Calu3 (cell line): ENCODE measurements at regions of chr19 and their contacts with region 1.

Region 1: GRCh38 chr19:51338563-51339312 is 3.2 kb downstream of the VSIG10L start:
- DNase-seq: peak; percentile 91
- H3K4me3 Mint-ChIP-seq: peak overlapping the region; percentile 72
- H3K27ac Mint-ChIP-seq: no peak overlapping the region
- H3K4me1 Mint-ChIP-seq: peaks cover 30% of the 10 kb centered on the region
- H3K27me3 Mint-ChIP-seq: no peaks in the 10 kb centered on the region
- CTCF ChIP-seq: peak; percentile 98

Region 2: DNA sequence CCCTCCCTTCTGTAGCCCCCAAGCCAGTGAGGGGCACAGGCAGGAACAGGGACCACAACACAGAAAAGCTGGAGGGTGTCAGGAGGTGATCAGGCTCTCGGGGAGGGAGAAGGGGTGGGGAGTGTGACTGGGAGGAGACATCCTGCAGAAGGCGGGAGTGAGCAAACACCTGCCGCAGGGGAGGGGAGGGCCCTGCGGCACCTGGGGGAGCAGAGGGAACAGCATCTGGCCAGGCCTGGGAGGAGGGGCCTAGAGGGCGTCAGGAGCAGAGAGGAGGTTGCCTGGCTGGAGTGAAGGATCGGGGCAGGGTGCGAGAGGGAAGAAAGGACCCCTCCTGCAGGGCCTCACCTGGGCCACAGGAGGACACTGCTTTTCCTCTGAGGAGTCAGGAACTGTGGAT is 479.8 kb before region 1 on chr19:
- CTCF ChIA-PET with region 1: no interaction called
- intact Hi-C with region 1: no loop called
- DNase-seq: no peak
- H3K4me3 Mint-ChIP-seq: no peak overlapping the region
- H3K27ac Mint-ChIP-seq: no peak overlapping the region
- H3K4me1 Mint-ChIP-seq: no peaks in the 10 kb centered on the region
- H3K27me3 Mint-ChIP-seq: no peaks in the 10 kb centered on the region
- CTCF ChIP-seq: no peak

Region 3: DNA sequence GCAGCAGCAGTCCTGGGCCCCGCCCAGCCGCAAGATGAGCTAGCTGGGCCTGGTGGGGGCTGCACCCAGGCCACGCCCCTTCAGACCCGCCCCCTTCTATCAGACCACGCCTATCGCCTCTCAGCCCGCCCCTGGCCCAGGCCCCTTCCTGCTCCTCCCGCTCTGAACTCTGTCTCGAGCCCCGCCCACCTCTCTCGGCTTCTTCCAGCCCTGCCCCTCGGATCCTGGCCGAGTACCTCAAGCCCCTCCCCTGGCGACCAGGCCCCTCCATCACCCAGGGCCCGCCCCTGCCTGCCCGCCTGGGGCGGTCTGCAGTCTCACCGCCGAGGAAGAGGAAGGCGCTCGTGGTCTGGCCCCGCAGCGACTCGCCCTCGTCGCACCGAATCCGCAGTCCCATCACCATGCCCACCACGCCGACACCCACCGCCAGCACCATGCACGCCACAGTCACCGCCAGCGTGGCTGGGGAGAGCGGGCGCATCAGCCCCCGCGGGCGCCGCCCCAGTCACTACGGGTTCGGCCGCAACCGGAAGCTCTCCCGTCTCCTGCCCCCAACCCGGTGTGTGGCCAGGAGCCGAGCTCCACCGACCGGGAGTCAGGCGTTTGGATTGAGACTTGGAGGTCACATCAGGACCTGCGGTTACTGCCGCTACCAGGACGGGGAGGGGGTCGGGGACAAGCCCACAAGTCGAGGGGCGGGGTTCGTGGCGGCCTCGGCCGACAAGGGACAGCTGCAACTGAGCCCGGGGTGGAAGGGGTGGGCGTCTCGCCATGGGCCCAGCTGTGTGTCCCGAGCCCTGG is 29.0 kb after region 1 on chr19:
- CTCF ChIA-PET with region 1: interaction called, 17 read pairs
- intact Hi-C with region 1: loop called (anchors 2 kb)
- DNase-seq: peak; percentile 100
- H3K4me3 Mint-ChIP-seq: peak overlapping the region; percentile 80
- H3K27ac Mint-ChIP-seq: peak overlapping the region; percentile 93
- H3K4me1 Mint-ChIP-seq: peaks cover 20% of the 10 kb centered on the region
- H3K27me3 Mint-ChIP-seq: peaks cover 32% of the 10 kb centered on the region
- CTCF ChIP-seq: no peak

Region 4: DNA sequence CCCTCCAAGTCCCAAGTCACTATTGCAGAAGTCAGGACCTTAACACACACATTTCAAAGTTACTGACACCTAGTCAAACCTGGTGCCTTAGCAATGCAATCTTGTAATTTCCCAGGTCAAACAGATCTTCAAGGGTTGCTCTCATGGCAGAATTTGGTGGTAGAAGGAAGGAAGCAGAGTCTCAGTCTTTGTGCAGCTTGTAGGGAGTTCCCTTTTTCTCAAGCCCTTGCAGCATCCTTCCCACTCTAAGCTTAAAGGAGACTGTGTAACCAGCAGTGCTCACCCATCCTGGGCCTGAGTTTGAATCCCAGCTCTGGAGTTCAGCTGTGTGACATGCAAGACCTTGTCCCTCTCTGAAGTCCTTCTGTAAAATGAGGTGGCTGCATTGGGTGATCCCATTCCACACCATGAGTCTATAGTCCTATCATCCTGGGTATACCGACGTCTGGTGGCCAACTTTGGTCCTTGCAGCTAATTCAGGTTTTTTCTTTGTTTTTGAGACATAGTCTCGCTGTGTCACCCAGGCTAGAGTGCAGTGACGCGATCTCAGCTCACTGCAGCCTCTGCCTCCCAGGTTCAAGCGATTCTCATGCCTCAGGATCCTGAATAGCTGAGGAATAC is 68.9 kb after region 1 on chr19:
- CTCF ChIA-PET with region 1: interaction called, 11 read pairs
- intact Hi-C with region 1: loop called (anchors 1 kb)
- DNase-seq: peak; percentile 57
- H3K4me3 Mint-ChIP-seq: no peak overlapping the region
- H3K27ac Mint-ChIP-seq: no peak overlapping the region
- H3K4me1 Mint-ChIP-seq: no peaks in the 10 kb centered on the region
- H3K27me3 Mint-ChIP-seq: peaks cover 33% of the 10 kb centered on the region
- CTCF ChIP-seq: peak; percentile 51